ENCODE measurements at regions of chr1 and their contacts with region 1.

Region 1: DNA sequence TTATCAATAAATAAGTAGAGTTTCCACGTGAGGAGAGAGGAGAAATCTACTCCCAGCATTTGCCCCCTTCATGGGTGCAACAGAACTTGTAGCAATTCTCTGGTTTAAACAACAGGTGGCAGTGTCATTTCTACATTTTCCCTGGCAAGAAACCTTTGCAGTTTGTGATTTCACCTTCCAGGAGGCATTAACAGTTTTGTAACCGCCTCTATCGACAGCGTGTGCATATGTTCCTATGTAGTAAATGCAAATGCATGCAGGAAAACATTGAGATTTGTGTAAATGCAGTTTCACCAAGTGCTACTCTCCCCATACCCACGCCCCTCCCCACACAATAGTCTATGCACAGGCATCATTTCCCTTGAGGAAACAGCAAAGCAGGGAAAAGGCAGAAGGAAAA is 494.7 kb downstream of the SMYD3 start:
- DNase-seq: no peak
- H3K4me3 ChIP-seq: no peak overlapping the region
- H3K27ac ChIP-seq: no peak overlapping the region
- H3K4me1 ChIP-seq: no peaks in the 10 kb centered on the region
- H3K27me3 ChIP-seq: no peaks in the 10 kb centered on the region
- CTCF ChIP-seq: peak; percentile 50

Region 2: GRCh38 chr1:246280551-246280950 is 268.2 kb after region 1 on chr1:
- intact Hi-C with region 1: loop called (anchors 10 kb)
- DNase-seq: no peak
- H3K4me3 ChIP-seq: no peak overlapping the region
- H3K27ac ChIP-seq: no peak overlapping the region
- H3K4me1 ChIP-seq: no peaks in the 10 kb centered on the region
- H3K27me3 ChIP-seq: no peaks in the 10 kb centered on the region
- CTCF ChIP-seq: no peak

Region 3: DNA sequence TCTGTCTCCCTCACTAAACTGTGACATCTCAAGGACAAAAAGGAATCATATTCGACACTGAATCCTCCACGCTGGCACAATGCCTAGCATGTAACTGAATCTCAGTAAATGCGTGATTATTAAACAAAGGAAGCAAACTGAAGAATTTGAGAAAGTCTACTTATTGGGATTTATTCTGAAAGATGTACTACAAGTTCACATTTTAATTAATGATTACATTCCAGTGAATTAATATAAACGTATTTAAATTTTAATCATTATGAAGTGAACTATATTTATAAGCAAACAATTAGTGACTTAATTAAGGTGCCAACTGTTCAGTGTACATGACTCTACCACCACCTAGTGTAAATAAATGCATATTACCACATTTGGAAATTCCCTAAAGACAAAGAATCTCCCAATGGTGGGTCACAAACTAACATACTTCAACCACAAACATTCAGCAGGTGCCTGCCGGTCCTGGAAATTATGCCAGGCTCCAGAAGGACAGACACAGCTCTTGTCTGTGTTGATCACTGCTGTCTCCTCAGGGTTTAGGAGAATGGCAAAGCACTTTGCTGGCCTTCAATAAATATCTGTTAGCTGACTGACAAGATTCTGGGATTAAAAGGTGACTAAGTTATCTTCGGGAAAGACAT is 438.4 kb after region 1 on chr1:
- intact Hi-C with region 1: loop called (anchors 5 kb)
- DNase-seq: no peak
- H3K4me3 ChIP-seq: no peak overlapping the region
- H3K27ac ChIP-seq: no peak overlapping the region
- H3K4me1 ChIP-seq: no peaks in the 10 kb centered on the region
- H3K27me3 ChIP-seq: no peaks in the 10 kb centered on the region
- CTCF ChIP-seq: peak; percentile 58

Region 4: DNA sequence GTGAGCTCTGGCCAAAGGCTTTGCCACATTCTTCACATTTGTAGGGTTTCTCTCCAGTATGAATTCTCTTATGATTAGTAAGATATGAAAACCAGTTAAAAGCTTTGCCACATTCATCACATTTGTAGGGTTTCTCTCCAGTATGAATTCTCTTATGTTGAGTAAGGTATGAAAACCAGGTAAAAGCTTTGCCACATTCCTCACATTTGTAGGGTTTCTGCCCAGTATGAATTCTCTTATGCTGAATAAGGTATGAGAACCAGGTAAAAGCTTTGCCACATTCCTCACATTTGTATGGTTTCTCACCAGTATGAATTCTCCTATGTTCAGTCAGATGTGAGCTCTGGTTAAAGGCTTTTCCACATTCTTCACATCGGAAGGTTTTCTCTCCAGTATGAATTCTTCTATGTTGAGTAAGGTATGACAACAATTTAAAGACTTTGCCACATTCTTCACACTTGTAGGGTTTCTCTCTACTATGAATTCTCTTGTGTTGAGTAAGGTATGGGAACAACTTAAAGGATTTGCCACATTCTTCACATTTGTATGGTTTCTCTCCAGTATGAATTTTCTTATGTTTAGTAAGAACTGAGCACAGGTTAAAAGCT is 974.8 kb after region 1 on chr1:
- intact Hi-C with region 1: no loop called
- DNase-seq: no peak
- H3K4me3 ChIP-seq: no peak overlapping the region
- H3K27ac ChIP-seq: no peak overlapping the region
- H3K4me1 ChIP-seq: no peaks in the 10 kb centered on the region
- H3K27me3 ChIP-seq: no peaks in the 10 kb centered on the region
- CTCF ChIP-seq: no peak

Measured in colonic mucosa (tissue), 4 donors.